CD4-positive, alpha-beta T cell (primary cell): ENCODE measurements at regions of chr1 and their contacts with region 1.

Region 1: DNA sequence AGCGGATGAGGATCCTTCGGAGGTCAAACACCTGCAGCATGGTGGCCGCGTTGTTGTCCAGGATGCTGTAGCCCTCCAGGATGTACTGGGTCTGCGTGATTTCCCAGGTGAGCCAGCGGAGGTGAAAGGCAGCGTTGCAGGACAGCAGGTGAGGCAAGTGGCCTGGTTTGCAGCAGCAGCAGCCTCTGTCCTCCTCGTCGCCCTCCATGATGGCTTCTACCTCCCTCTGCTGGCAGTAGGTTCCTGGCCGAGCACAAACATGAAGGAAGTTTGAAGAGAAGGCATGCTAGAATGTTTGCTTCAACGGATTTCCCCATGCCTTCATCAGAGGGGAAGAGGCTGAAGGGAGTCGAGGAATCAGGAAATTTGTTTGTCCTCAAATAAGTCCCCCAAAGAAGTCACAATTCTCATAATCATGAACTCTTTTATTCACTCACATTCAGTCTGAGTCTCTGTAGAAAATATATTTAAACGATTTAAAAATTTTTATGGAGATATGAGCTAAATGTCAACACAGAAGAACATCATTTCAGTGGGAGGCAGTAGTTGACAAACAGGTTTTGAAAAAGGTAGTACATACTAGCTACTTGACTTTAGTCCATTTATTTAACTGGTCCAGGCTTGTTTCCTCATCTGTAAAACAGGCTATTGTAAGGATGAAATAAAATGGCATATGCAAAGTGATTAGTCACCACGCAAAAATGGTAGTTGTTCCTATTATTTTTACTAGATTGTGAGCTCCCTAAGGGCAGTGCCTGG is 74.9 kb downstream of the NTPCR start:
- DNase-seq: peak in 4 of 14 experiments; percentile 10 to 43 (median 27)
- ATAC-seq: no peak
- H3K4me3 ChIP-seq: no peak overlapping the region
- H3K4me3 Mint-ChIP-seq: no peak overlapping the region
- H3K27ac ChIP-seq: no peak overlapping the region
- H3K27ac Mint-ChIP-seq: no peak overlapping the region
- H3K4me1 ChIP-seq: peaks cover 5% of the 10 kb centered on the region
- H3K4me1 Mint-ChIP-seq: no peaks in the 10 kb centered on the region
- H3K27me3 ChIP-seq: no peaks in the 10 kb centered on the region
- H3K27me3 Mint-ChIP-seq: no peaks in the 10 kb centered on the region
- CTCF ChIP-seq: no peak

Region 2: DNA sequence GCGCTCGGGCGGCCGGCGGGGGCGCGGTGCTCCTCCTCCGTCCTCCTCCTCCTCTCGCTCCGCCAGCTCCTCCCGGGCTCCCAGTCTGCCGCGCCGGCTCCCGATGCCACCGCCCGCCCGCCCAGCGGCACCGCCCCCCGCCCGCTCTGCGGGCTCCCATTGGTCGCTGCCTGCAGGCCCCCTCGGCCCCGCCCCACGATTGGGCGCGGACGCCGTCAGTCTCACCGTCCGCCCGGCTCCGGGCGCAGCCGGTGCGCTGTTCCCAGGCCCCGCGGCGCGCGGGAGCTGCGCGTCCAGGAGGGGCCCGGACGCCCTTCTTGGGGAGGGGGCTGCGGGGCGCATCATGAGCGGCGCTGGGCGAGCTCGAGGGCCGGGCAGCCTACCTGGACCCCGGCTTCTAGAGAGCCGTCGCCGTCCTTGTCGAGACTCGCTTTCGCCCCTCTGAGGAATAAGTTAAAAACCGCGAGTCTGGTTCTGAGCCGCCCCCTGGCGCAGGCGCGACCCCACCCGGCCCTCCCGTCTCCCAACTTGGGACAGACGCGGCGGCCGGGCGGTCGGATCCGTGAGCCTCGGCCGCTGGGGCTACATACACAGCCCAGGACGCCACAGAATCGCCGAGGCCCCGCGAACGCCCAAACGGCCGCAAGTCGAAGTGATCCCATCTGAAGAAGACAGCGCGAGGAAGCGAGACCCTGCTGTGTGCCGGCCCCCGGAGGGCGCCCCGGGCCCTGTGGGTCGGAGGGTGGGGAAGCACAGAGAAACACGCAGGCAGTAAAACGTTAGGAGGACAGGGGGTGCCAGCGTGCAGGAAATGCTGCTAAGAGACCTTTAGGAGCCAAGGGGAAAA is 395.1 kb before region 1 on chr1 and contains the start of gene SIPA1L2:
- CTCF ChIA-PET with region 1: no interaction called
- POLR2A ChIA-PET with region 1: no interaction called
- intact Hi-C with region 1: loop called (anchors 1 to 5 kb)
- DNase-seq: peak; percentile 67 to 93 (median 82)
- ATAC-seq: peak; percentile 89
- H3K4me3 ChIP-seq: peak within 1 kb of the TSS; percentile 71
- H3K4me3 Mint-ChIP-seq: peak within 1 kb of the TSS; percentile 93
- H3K27ac ChIP-seq: no peak within 1 kb of the TSS
- H3K27ac Mint-ChIP-seq: peak within 1 kb of the TSS; percentile 42
- H3K4me1 ChIP-seq: peaks cover 18% of the 10 kb centered on the region
- H3K4me1 Mint-ChIP-seq: peaks cover 29% of the 10 kb centered on the region
- H3K27me3 ChIP-seq: peaks cover 6 to 19% of the 10 kb centered on the region in 2 experiments
- H3K27me3 Mint-ChIP-seq: peaks cover 39% of the 10 kb centered on the region
- CTCF ChIP-seq: peak; percentile 8
- total RNA-seq, gene SIPA1L2: 1.8 to 1.9 TPM